Mammary epithelial cell (primary cell): ENCODE measurements at regions of chr13 and their contacts with region 1.

Region 1: GRCh38 chr13:106899439-106899838 is 331.5 kb upstream of the ARGLU1 start:
- DNase-seq: no peak
- H3K4me3 ChIP-seq: no peak overlapping the region
- H3K27ac ChIP-seq: no peak overlapping the region
- H3K4me1 ChIP-seq: no peaks in the 10 kb centered on the region
- H3K27me3 ChIP-seq: no peaks in the 10 kb centered on the region
- CTCF ChIP-seq: no peak

Region 2: GRCh38 chr13:106804991-106805390 is 94.4 kb before region 1 on chr13:
- CTCF ChIA-PET with region 1: no interaction called
- dilution Hi-C with region 1: loop called (anchors 5 kb)
- in situ Hi-C with region 1: no loop called
- intact Hi-C with region 1: no loop called
- DNase-seq: no peak
- H3K4me3 ChIP-seq: no peak overlapping the region
- H3K27ac ChIP-seq: no peak overlapping the region
- H3K4me1 ChIP-seq: no peaks in the 10 kb centered on the region
- H3K27me3 ChIP-seq: no peaks in the 10 kb centered on the region
- CTCF ChIP-seq: no peak